ENCODE measurements at regions of chr12 and their contacts with region 1.

Region 1: GRCh38 chr12:68317047-68317667 is 15.0 kb downstream of the MDM1 start:
- DNase-seq: peak; percentile 68
- ATAC-seq: no peak
- H3K4me3 Mint-ChIP-seq: no peak overlapping the region
- H3K27ac Mint-ChIP-seq: no peak overlapping the region
- H3K4me1 Mint-ChIP-seq: no peaks in the 10 kb centered on the region
- H3K27me3 Mint-ChIP-seq: no peaks in the 10 kb centered on the region
- CTCF ChIP-seq: peak; percentile 82

Region 2: GRCh38 chr12:68236421-68237059 is 80.6 kb before region 1 on chr12:
- CTCF ChIA-PET with region 1: interaction called, 16 read pairs
- POLR2A ChIA-PET with region 1: no interaction called
- intact Hi-C with region 1: no loop called
- DNase-seq: peak; percentile 54
- ATAC-seq: peak; percentile 56
- H3K4me3 Mint-ChIP-seq: peak overlapping the region; percentile 76
- H3K27ac Mint-ChIP-seq: peak overlapping the region; percentile 86
- H3K4me1 Mint-ChIP-seq: peaks cover 55% of the 10 kb centered on the region
- H3K27me3 Mint-ChIP-seq: no peaks in the 10 kb centered on the region
- CTCF ChIP-seq: no peak

Region 3: DNA sequence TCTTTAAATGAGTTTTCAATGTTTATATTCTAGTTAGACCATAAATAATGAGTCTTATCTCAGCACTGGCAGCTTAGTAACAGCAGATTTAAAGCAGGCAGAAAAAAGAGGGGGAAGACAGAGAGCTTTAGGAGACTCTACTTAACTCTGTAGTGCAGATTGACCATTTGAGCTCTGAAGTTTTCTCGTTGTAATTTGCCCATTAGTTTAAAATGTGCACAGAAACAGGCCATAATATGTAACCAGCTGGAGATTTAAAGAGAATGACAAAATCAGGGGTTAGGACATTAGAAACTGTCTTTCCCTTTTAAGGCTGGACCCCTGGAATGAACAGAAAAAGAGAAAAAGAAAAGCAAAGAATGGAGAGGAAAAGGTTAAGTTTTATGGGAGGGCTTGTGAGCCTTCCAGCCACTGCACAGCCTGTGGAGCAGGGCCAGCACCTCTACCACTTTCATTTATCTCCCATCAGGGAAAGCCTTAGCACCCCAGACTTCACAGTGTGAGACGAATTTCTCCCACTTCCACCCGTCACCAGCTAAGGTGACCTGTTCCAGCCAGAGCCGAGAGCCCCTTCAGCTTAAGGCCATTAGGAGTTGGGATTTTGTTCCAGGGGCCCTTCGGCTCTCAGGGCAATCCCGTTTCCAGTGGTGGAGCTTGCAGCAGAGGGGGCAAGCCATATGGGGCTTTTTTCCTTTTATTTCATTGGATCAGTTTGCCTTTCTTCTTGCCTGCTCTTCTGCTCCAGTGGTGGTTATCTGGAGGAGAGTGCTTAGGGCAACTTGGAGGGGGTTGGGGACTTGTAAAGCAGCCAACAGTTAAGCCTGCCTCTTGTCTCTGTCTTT is 71.8 kb before region 1 on chr12:
- CTCF ChIA-PET with region 1: interaction called, 12 read pairs
- POLR2A ChIA-PET with region 1: no interaction called
- intact Hi-C with region 1: no loop called
- DNase-seq: no peak
- ATAC-seq: no peak
- H3K4me3 Mint-ChIP-seq: no peak overlapping the region
- H3K27ac Mint-ChIP-seq: no peak overlapping the region
- H3K4me1 Mint-ChIP-seq: peaks cover 24% of the 10 kb centered on the region
- H3K27me3 Mint-ChIP-seq: peaks cover 3% of the 10 kb centered on the region
- CTCF ChIP-seq: no peak

Region 4: DNA sequence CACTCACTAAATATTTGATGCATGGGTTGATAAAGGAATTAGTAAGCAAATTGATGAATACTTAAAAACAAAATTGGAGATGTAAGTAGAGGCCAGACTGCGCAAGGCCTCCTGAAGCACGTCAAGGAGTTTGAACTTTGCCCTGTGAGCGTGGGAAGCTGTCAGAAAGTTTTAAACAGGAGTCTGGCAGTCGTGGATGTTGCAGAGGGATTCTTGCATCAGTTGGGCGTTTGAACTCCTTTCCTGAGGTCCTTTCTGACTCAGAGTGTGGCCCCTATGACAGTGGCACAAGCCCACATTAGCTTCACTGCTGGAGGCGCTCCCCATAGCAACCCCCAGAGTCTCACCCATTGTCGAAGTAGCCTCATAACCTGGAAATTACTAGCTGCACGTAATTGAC is 45.8 kb before region 1 on chr12:
- CTCF ChIA-PET with region 1: no interaction called
- POLR2A ChIA-PET with region 1: no interaction called
- intact Hi-C with region 1: no loop called
- DNase-seq: no peak
- ATAC-seq: no peak
- H3K4me3 Mint-ChIP-seq: no peak overlapping the region
- H3K27ac Mint-ChIP-seq: no peak overlapping the region
- H3K4me1 Mint-ChIP-seq: peaks cover 28% of the 10 kb centered on the region
- H3K27me3 Mint-ChIP-seq: peaks cover 13% of the 10 kb centered on the region
- CTCF ChIP-seq: no peak

Region 5: GRCh38 chr12:68331869-68332727 is 14.9 kb after region 1 on chr12 and contains the start of gene MDM1:
- CTCF ChIA-PET with region 1: interaction called, 10 read pairs
- POLR2A ChIA-PET with region 1: no interaction called
- intact Hi-C with region 1: no loop called
- DNase-seq: peak; percentile 98
- ATAC-seq: peak; percentile 98
- H3K4me3 Mint-ChIP-seq: peak within 1 kb of the TSS; percentile 83
- H3K27ac Mint-ChIP-seq: peak within 1 kb of the TSS; percentile 83
- H3K4me1 Mint-ChIP-seq: peaks cover 39% of the 10 kb centered on the region
- H3K27me3 Mint-ChIP-seq: no peaks in the 10 kb centered on the region
- CTCF ChIP-seq: no peak
- total RNA-seq, gene MDM1: 15.4 to 17.9 TPM

Measured in activated CD8-positive, alpha-beta T cell treated with anti-CD3 and anti-CD28 coated beads for 36 hours (primary cell).